Caco-2 (cell line): ENCODE measurements at regions of chr2 and their contacts with region 1.

Region 1: DNA sequence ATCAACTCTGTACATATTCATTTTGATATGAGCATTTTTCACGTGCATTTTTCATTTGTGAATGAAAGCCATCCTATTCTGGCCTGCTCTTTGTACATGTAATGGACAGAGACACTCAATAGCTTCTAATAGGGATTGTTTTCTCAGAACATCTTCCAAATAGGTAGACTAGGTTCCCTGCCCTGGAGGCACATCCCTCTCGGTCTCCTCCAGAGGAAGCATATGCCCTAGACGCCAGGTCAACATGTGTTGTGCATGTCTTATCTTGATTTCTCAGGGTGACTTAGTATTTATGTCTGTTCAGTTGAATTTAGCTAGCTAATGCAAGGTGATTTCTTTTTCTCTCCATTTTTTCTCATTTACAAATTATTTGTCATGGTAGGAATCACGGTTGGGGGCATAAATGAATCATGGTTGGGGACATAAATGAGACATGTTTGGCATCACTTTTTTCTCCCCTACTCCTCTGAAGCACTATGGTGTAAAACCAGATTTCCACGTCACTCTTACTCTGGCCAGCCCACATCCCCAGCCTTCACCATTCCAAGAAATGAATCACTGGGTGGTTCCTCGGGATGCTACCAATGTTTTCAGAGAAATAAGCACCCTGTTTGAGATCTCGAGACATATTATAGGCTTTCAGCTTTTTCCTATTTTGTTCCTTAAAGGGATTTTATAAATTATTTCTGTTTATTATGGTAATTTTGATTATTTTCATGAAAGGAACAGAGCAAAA is 154.8 kb upstream of the SLC8A1 start:
- DNase-seq: no peak
- H3K4me3 ChIP-seq: no peak overlapping the region
- H3K4me3 Mint-ChIP-seq: no peak overlapping the region
- H3K27ac Mint-ChIP-seq: no peak overlapping the region
- H3K4me1 ChIP-seq: no peaks in the 10 kb centered on the region
- H3K4me1 Mint-ChIP-seq: no peaks in the 10 kb centered on the region
- H3K27me3 ChIP-seq: no peaks in the 10 kb centered on the region
- H3K27me3 Mint-ChIP-seq: peaks cover 7% of the 10 kb centered on the region
- CTCF ChIP-seq: no peak

Region 2: GRCh38 chr2:41101281-41101680 is 494.6 kb after region 1 on chr2:
- CTCF ChIA-PET with region 1: no interaction called
- POLR2A ChIA-PET with region 1: no interaction called
- intact Hi-C with region 1: loop called (anchors 5 kb)
- DNase-seq: no peak
- H3K4me3 ChIP-seq: no peak overlapping the region
- H3K4me3 Mint-ChIP-seq: no peak overlapping the region
- H3K27ac Mint-ChIP-seq: no peak overlapping the region
- H3K4me1 ChIP-seq: no peaks in the 10 kb centered on the region
- H3K4me1 Mint-ChIP-seq: no peaks in the 10 kb centered on the region
- H3K27me3 ChIP-seq: no peaks in the 10 kb centered on the region
- H3K27me3 Mint-ChIP-seq: no peaks in the 10 kb centered on the region
- CTCF ChIP-seq: no peak